Sciatic nerve (tissue), 2 donors: ENCODE measurements at regions of chr10 and their contacts with region 1.

Region 1: GRCh38 chr10:42872865-42873643 is 90.5 kb downstream of the BMS1 start:
- DNase-seq: no peak
- ATAC-seq: no peak

Region 2: GRCh38 chr10:43105102-43105785 is 232.2 kb after region 1 on chr10:
- intact Hi-C with region 1: loop called (anchors 5 kb)
- DNase-seq: peak; percentile 84
- ATAC-seq: peak; percentile 91

Region 3: DNA sequence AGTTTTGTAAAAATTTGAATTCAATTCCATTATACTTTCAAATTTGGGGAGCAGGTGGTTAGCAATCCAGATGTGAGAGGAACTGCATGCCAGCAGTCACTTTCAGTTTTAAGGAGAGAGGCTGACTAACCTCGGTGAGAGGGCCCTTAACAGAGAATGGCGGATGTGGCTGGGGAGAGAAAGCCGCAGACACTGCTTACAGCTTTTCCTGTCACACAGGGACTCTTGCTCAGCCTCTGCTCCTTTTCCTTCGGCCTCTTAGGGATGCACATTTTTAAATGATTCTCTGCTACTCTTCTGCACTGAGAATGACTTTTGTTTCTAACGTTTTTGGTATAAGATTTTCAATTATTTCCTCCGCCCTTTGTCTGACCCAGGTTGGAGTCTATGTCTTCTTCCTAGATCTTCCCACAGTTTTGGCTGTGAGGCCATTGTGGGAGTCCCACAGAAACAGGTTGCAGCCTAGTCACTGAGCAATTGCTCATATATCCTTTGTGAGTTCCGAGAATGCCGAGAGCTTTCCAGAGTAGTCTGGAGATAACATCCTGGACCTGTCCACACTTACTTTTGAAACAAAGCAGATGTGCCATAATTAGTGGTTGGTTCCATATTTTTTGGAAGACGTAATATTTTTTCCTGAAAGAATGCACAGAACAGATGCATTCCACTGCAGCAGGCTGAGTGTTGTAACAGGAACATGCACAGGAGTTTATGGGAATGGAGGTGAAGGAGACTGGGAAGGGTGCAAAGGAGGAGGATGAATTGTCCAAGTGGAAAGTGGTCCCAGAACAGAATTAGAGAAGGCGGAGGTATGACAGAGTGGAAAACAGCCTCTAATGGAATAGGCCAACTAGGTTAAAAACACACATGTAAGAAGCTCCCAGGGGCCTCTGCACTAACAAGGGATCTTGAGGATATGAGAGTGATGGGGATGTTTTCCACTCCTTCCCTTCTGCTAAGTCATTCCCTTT is 943.6 kb after region 1 on chr10:
- intact Hi-C with region 1: no loop called
- DNase-seq: no peak
- ATAC-seq: peak; percentile 57